GM12878 (cell line): ENCODE measurements at regions of chr1 and their contacts with region 1.

Region 1: DNA sequence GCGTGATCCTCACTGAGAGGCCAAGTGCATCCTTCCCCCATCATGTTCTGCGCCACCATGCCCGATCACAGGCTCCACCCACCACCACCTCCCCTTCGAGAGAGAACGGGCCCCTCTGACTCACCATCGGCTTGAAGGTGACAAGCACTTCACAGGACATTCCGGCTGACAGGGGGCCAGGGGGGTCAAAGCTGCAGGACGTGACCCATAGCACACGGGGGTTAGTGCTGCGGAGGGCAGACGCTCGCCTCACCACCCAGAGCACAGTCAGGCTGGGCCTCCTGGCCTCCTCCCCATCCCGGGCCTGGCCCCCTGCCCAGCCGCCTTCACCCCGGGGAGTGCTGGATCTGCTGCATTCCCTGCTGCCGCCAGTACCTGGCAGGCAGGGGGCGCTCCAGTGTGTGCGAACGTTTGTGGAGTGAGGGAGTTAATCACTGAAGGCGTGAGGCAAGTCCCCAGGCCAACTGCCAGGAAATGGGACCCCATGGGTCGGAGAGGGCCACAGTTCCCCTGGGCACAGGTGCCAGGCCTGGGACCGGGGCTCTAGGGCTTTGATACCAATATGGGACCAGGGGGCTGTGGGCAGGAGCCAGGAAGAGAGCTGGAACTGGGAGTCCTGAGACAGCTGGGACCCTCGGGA is 40.9 kb upstream of the TMEM52 start:
- DNase-seq: no peak
- ATAC-seq: peak; percentile 78
- H3K4me3 ChIP-seq: no peak overlapping the region
- H3K27ac ChIP-seq: no peak overlapping the region
- H3K4me1 ChIP-seq: no peaks in the 10 kb centered on the region
- H3K27me3 ChIP-seq: peaks cover 0 to 3% of the 10 kb centered on the region in 2 experiments; a peak in 1 of 4 replicates
- CTCF ChIP-seq: peak; percentile 61 to 73 (median 63)
- EP300 ChIP-seq: no peak
- POLR2A ChIP-seq: no peak
- RAD21 ChIP-seq: peak; percentile 63

Region 2: GRCh38 chr1:2032737-2033136 is 72.8 kb after region 1 on chr1:
- CTCF ChIA-PET with region 1: no interaction called
- POLR2A ChIA-PET with region 1: no interaction called
- RAD21 ChIA-PET with region 1: no interaction called
- SMC1A ChIA-PET with region 1: no interaction called
- in situ Hi-C with region 1: no loop called
- intact Hi-C with region 1: no loop called
- DNase-seq: no peak
- ATAC-seq: no peak
- H3K4me3 ChIP-seq: no peak overlapping the region
- H3K27ac ChIP-seq: no peak overlapping the region
- H3K4me1 ChIP-seq: no peaks in the 10 kb centered on the region
- H3K27me3 ChIP-seq: no peaks in the 10 kb centered on the region
- CTCF ChIP-seq: no peak
- EP300 ChIP-seq: no peak
- POLR2A ChIP-seq: no peak
- RAD21 ChIP-seq: no peak

Region 3: GRCh38 chr1:2044510-2045319 is 84.8 kb after region 1 on chr1:
- CTCF ChIA-PET with region 1: interaction called, 17 read pairs
- POLR2A ChIA-PET with region 1: no interaction called
- RAD21 ChIA-PET with region 1: interaction called, 3 read pairs
- SMC1A ChIA-PET with region 1: no interaction called
- in situ Hi-C with region 1: no loop called
- intact Hi-C with region 1: loop called (anchors 1 kb)
- DNase-seq: no peak
- ATAC-seq: peak; percentile 85
- H3K4me3 ChIP-seq: no peak overlapping the region
- H3K27ac ChIP-seq: no peak overlapping the region
- H3K4me1 ChIP-seq: no peaks in the 10 kb centered on the region
- H3K27me3 ChIP-seq: peaks cover 0 to 4% of the 10 kb centered on the region in 2 experiments; a peak in 3 of 4 replicates
- CTCF ChIP-seq: peak; percentile 65 to 69 (median 69); a peak in 5 of 6 replicates
- EP300 ChIP-seq: no peak
- POLR2A ChIP-seq: no peak
- RAD21 ChIP-seq: peak; percentile 53

Region 4: GRCh38 chr1:2174348-2175054 is 214.5 kb after region 1 on chr1:
- CTCF ChIA-PET with region 1: no interaction called
- POLR2A ChIA-PET with region 1: no interaction called
- RAD21 ChIA-PET with region 1: no interaction called
- SMC1A ChIA-PET with region 1: no interaction called
- in situ Hi-C with region 1: no loop called
- intact Hi-C with region 1: loop called (anchors 5 kb)
- DNase-seq: no peak
- ATAC-seq: peak; percentile 73
- H3K4me3 ChIP-seq: no peak overlapping the region
- H3K27ac ChIP-seq: no peak overlapping the region
- H3K4me1 ChIP-seq: no peaks in the 10 kb centered on the region
- H3K27me3 ChIP-seq: no peaks in the 10 kb centered on the region
- CTCF ChIP-seq: peak; percentile 73 to 93 (median 79)
- EP300 ChIP-seq: no peak
- POLR2A ChIP-seq: no peak
- RAD21 ChIP-seq: no peak

Region 5: DNA sequence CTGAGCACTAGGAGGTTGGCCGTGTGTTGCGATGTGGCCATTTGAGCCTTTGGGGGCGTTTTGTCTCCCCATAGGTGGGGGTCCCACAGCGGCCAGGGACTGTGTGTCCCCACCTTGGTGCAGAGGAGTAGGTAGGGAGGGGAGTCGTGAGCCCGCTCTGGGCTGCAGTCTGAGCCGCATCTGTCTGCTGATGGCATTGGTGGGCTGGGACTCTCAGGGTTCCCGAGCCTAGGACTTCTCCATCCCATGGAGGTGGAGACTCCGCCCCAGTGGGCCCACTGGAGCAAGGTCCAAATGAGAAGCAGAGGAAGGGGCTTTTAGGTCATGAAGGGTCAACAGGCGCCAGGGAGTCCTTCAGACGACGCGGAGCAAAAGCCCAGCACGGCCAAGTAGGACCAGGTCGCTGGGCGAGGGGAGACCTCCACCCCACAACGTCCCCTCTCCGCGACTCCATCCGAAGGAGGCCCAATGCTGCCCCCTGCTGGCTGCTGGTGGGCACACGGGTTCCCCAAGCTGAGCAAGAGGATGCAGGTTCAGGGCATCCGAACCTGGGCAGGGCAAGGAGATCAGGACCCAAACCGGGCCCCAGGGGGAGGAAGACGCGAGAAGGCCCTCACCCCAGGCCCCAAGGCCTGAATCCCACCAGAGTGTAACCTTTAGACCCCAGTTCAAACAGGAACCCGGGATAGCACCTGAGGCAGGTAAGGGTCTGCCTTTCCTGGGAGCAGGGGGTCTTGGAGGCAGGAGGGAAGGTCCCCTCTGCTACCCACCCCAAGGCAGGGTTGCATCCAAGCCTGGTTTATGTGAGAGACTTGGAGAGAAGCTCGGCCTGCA is 826.6 kb after region 1 on chr1:
- CTCF ChIA-PET with region 1: no interaction called
- POLR2A ChIA-PET with region 1: no interaction called
- RAD21 ChIA-PET with region 1: no interaction called
- SMC1A ChIA-PET with region 1: no interaction called
- in situ Hi-C with region 1: loop called (anchors 25 kb)
- intact Hi-C with region 1: no loop called
- DNase-seq: no peak
- ATAC-seq: peak; percentile 75
- H3K4me3 ChIP-seq: no peak overlapping the region
- H3K27ac ChIP-seq: no peak overlapping the region
- H3K4me1 ChIP-seq: no peaks in the 10 kb centered on the region
- H3K27me3 ChIP-seq: no peaks in the 10 kb centered on the region
- CTCF ChIP-seq: peak; percentile 64 to 80 (median 72)
- EP300 ChIP-seq: no peak
- POLR2A ChIP-seq: no peak
- RAD21 ChIP-seq: peak; percentile 62